BJ (cell line): ENCODE measurements at regions of chr18 and their contacts with region 1.

Region 1: DNA sequence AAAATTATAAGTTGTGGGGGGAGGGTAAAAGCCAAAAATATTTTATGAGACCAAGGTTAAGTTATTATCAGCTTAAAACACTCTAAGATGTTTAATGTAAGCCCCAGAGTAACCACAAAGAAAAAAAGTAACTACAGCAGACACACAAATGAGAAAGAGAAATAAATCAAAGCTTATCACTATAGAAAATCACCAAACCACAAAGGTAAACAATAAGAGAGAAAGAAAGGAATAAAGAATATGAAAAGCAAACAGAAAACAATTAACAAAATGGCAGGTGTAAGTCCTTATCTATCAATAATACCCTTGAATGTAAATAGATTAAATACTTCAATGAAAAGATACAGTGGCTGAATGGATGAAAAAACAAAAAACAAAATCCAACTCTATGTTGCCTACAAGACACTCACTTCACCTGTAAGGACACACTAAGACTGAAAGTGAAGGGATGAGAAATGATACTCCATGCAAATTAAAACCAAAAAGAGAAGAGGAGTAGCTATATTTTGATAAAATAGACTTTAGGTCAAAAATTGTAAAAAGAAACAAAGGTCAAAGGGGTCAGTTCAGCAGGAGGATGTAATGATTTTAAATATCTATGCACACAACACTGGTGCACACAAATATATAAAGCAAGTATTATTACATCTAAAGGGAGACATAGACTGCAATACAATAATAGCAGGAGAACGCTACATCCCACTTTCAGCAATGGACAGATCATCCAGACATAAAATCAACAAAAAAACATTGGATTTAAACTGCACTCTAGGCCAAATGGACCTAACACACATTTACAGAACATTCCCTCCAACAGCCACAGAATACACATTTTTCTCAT is 80.7 kb downstream of the PTPN2 start:
- DNase-seq: no peak
- H3K4me3 ChIP-seq: no peak overlapping the region
- H3K27me3 ChIP-seq: no peaks in the 10 kb centered on the region
- CTCF ChIP-seq: no peak

Region 2: DNA sequence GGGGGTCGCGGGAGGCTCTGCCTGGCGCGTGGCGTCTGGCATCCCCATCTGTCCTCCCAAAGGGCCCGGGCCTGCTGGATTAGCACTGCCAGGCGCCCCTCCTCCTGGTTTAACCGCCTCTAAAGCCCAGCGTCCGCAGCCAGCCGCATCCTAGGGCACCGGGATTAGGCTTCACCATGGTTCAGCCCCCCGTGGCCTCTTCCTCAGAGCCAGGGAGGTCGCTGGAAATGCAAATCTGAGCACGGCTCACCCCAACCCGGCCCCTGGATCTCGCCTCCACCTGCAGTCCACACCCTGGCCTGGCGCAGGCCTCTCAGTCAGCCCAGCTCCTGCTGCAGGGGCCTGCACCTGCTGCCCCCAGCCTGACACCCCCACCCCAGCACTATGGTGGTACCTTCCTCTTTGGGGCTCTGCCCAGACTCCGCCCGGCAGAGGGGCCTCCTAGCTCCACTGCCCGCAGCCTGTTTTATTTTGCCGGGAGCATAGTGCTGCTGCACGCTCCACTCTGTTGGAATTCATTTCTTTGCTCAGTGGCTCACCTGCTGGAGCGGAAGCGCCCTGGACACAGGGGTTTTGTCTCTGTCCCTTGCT is 382.4 kb before region 1 on chr18:
- CTCF ChIA-PET with region 1: no interaction called
- POLR2A ChIA-PET with region 1: no interaction called
- DNase-seq: no peak
- H3K4me3 ChIP-seq: peak overlapping the region; percentile 62
- H3K27me3 ChIP-seq: no peaks in the 10 kb centered on the region
- CTCF ChIP-seq: no peak

Region 3: GRCh38 chr18:12777500-12777944 is 25.8 kb before region 1 on chr18:
- CTCF ChIA-PET with region 1: interaction called, 3 read pairs
- POLR2A ChIA-PET with region 1: interaction called, 14 read pairs
- DNase-seq: no peak
- H3K4me3 ChIP-seq: no peak overlapping the region
- H3K27me3 ChIP-seq: no peaks in the 10 kb centered on the region
- CTCF ChIP-seq: no peak